Ascending aorta (tissue), 2 donors: ENCODE measurements at regions of chr17 and their contacts with region 1.

Region 1: DNA sequence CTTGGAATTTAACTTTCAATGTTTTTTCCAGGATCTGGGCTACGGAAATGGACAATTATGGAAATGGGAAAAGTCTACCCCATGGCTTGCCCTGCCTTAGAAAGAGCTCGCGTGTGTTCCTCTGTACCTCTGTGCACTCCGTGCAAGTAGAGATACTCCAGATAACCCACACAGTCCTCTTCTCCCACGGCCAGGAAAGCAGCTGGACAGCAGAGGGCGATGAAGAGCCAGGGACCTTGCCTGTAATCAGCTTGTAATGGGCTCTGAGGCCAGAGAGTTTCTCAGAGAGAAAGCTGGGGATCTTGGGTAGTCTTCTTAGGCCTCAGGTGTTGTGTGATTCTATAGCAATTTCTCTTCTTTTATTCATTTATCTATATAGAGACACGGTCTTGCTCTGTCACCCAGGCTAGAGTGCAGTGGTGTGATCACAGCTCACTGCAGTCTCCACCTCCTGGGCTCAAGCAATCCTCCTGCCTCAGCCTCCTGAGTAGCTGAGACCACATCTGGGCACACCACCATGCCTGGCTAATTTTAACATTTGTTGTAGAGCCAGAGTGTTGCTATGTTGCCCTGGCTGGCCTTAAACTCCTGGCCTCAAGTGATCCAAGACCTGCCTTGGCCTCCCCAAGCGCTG is 2.4 kb upstream of the SOCS7 start:
- DNase-seq: peak; percentile 51 to 90
- H3K4me3 ChIP-seq: no peak overlapping the region
- H3K27ac ChIP-seq: peak overlapping the region; percentile 37 to 48
- H3K4me1 ChIP-seq: peaks cover 5 to 6% of the 10 kb centered on the region in 2 donors
- H3K27me3 ChIP-seq: no peaks in the 10 kb centered on the region
- CTCF ChIP-seq: peak; percentile 83 to 89 (median 84)

Region 2: GRCh38 chr17:38403491-38403890 is 54.3 kb after region 1 on chr17:
- intact Hi-C with region 1: no loop called
- DNase-seq: no peak
- H3K4me3 ChIP-seq: no peak overlapping the region
- H3K27ac ChIP-seq: no peak overlapping the region
- H3K4me1 ChIP-seq: no peaks in the 10 kb centered on the region
- H3K27me3 ChIP-seq: no peaks in the 10 kb centered on the region
- CTCF ChIP-seq: no peak

Region 3: DNA sequence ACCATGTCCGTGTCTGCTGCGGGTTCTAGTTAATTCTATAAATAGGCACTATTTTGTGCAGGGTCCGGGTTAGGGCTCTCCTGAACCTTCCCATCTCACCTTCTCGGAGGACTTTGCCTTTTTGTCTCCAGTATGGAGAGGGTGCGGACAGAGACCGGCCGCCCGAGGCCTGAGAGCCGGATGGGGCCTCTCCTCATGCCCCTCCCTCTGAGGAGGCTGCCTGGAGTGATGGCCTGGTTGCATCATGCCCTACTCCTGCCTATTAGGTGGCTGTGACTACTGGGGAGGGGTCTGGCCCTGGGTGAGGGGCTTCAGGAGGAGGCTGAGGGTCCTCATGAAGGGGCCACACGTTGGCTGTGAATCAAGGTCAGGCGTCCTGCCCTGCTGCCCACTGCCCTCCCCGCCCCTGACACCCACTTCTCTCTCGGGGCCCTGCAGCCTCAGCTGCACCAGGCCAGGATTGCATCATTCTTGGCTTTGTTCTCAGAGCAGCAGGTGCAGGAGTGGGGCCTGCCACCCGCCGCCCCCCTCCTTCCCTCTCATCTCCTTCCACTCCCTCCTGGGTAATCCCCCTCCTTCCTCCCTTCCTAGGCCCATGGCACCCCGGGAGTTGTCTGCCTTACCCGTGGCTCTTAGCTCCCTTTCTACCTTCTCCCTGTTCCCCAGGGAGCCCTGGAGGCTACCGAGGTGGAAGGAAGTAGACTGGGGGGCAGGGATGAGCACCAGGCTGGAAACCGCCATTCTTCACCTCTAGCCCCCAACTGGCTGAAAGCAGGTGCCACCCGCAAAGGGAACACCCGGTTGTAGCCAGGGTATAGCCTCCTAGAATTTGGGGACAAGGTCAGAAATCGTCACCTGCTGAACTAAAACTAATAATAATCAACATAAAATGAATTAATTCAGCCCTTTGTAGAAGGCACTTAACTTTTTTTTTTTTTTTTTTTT is 66.3 kb after region 1 on chr17:
- intact Hi-C with region 1: loop called (anchors 1 kb)
- DNase-seq: no peak
- H3K4me3 ChIP-seq: no peak overlapping the region
- H3K27ac ChIP-seq: no peak overlapping the region
- H3K4me1 ChIP-seq: peaks cover 4 to 25% of the 10 kb centered on the region in 2 donors
- H3K27me3 ChIP-seq: no peaks in the 10 kb centered on the region
- CTCF ChIP-seq: no peak

Region 4: GRCh38 chr17:38498186-38498752 is 149.1 kb after region 1 on chr17:
- intact Hi-C with region 1: no loop called
- DNase-seq: no peak
- H3K4me3 ChIP-seq: no peak overlapping the region
- H3K27ac ChIP-seq: no peak overlapping the region
- H3K4me1 ChIP-seq: no peaks in the 10 kb centered on the region
- H3K27me3 ChIP-seq: no peaks in the 10 kb centered on the region
- CTCF ChIP-seq: no peak

Region 5: DNA sequence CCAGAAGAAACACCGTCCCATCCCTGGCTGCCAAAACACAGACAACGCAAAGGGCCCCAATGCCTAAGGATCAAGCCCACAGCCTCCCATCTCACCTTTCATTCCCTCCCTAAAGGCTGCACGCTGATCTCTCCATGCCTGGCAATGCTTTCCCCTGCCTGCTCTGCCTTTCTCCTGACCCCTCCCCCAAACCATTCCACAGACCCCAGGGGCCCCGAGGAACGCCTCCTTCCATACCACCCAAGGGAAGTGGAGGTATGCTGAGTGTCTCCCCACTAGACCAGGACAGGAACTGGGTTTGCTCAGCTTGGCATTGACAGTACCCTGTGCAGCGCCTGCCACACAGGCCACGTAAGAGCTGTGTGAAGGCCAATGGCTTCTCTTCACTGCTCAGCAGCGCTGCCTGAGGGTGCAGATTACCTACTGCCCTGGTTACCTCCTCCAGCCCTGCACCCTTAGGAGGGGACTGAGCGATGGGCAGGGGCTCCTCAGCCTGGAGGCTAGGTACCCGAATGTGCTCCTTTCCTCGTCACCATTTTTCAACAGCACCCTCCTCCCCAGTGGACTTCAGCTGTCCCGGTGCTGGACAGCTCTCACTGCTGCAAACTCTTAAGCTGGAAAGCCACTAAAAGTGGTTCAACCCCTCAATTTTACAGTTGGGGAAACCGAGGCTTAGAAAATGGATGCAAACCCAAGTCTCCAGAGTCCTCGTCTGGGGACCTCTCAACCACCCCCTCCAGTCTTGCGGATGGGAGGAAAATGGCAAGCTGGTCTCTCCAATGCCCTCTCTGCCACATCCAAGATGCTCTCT is 211.5 kb after region 1 on chr17:
- intact Hi-C with region 1: no loop called
- DNase-seq: no peak
- H3K4me3 ChIP-seq: no peak overlapping the region
- H3K27ac ChIP-seq: no peak overlapping the region
- H3K4me1 ChIP-seq: peaks cover 7 to 14% of the 10 kb centered on the region in 2 donors
- H3K27me3 ChIP-seq: peaks cover 58% of the 10 kb centered on the region
- CTCF ChIP-seq: no peak